ENCODE measurements at regions of chr4 and their contacts with region 1.

Region 1: DNA sequence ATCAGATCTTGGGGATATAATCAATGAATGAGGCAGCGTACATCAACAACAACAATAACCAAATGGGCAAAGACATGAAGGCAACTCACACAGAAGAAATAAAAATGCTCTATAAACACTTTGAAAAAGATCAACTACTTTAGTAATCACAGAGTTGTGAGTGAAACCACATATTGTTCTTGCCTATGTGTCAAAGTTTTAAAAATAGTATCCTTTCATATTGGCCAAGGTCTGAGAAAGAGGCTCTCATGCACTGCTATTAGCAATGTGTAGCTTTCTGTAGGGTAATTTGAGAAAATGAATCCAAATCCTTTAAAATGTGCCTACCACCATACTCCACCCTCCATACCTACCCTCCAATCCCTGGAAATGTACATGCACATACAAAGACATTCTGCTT is 25.0 kb downstream of the COQ2 start:
- DNase-seq: no peak
- ATAC-seq: no peak
- H3K4me3 Mint-ChIP-seq: no peak overlapping the region
- H3K27ac Mint-ChIP-seq: no peak overlapping the region
- H3K4me1 Mint-ChIP-seq: peaks cover 3% of the 10 kb centered on the region
- H3K27me3 Mint-ChIP-seq: no peaks in the 10 kb centered on the region

Region 2: DNA sequence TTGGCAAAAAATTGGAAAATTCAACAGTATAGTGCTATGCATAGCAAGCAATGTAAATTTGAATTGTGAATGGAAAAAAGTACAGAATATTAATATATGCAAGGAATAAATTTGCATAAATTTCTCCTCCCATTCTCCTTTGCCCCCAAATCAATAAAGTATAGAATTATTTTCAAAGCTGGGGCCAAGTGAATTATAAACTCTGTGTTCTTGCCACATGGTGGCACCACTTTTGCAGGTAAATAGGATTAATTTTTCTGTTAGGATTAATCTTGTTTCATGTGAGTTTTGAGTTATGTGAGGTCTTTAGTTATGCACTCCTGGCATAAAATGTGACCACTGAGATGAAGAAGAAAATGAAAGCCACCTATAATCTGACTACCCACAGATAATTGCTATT is 204.7 kb before region 1 on chr4:
- CTCF ChIA-PET with region 1: interaction called, 25 read pairs
- DNase-seq: no peak
- ATAC-seq: no peak
- H3K4me3 Mint-ChIP-seq: no peak overlapping the region
- H3K27ac Mint-ChIP-seq: no peak overlapping the region
- H3K4me1 Mint-ChIP-seq: peaks cover 2% of the 10 kb centered on the region
- H3K27me3 Mint-ChIP-seq: no peaks in the 10 kb centered on the region

Region 3: GRCh38 chr4:83074086-83074704 is 185.4 kb before region 1 on chr4:
- CTCF ChIA-PET with region 1: interaction called, 55 read pairs
- DNase-seq: peak; percentile 76
- ATAC-seq: peak; percentile 91
- H3K4me3 Mint-ChIP-seq: no peak overlapping the region
- H3K27ac Mint-ChIP-seq: peak overlapping the region; percentile 52
- H3K4me1 Mint-ChIP-seq: peaks cover 25% of the 10 kb centered on the region
- H3K27me3 Mint-ChIP-seq: no peaks in the 10 kb centered on the region

Region 4: GRCh38 chr4:83237591-83237990 is 22.0 kb before region 1 on chr4:
- CTCF ChIA-PET with region 1: interaction called, 52 read pairs
- DNase-seq: no peak
- ATAC-seq: no peak
- H3K4me3 Mint-ChIP-seq: no peak overlapping the region
- H3K27ac Mint-ChIP-seq: no peak overlapping the region
- H3K4me1 Mint-ChIP-seq: peaks cover 34% of the 10 kb centered on the region
- H3K27me3 Mint-ChIP-seq: peaks cover 81% of the 10 kb centered on the region

Region 5: GRCh38 chr4:83272900-83273299 is 13.3 kb after region 1 on chr4:
- CTCF ChIA-PET with region 1: interaction called, 10 read pairs
- DNase-seq: no peak
- ATAC-seq: peak; percentile 54
- H3K4me3 Mint-ChIP-seq: peak overlapping the region; percentile 3
- H3K27ac Mint-ChIP-seq: peak overlapping the region; percentile 3
- H3K4me1 Mint-ChIP-seq: peaks cover 42% of the 10 kb centered on the region
- H3K27me3 Mint-ChIP-seq: no peaks in the 10 kb centered on the region